Sciatic nerve (tissue), 2 donors: ENCODE measurements at regions of chr6 and their contacts with region 1.

Region 1: GRCh38 chr6:84688141-84688873 is 76.1 kb downstream of the TBX18 start:
- DNase-seq: no peak
- ATAC-seq: peak; percentile 76

Region 2: GRCh38 chr6:84739866-84740208 is 51.5 kb after region 1 on chr6:
- intact Hi-C with region 1: loop called (anchors 2 kb)
- DNase-seq: no peak
- ATAC-seq: peak; percentile 25

Region 3: DNA sequence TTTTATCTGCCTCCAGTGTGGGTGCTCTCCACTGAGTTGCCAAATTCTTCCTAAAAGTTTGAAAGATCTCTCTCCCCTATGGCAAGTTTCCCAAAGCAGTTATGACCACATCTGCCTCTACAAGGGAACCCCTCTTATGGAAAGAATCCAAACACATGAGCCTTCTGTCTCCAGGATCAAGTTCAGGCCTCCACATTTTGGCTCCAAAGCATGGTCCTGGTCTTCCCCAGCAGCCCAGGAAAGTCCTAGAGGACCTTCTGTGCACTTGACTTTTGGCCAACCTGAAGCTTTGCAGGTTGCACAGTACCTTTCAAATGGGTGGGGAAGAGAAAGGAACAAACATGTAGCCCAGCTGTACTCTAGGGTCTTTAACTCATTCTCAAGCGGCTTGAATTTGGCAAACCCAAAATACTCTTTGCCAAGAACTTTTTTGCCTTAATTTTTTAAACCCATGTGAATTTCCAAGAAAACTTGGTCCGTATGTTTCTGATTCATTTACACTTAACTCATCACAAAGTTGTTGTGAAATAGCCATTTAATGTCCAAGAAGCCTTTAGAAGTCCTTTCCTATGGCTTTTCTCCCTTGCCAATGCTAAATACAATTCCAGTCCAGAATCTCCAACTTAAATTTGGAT is 316.2 kb after region 1 on chr6:
- intact Hi-C with region 1: no loop called
- DNase-seq: no peak
- ATAC-seq: peak; percentile 86